HepG2 (cell line): ENCODE measurements at regions of chr11 and their contacts with region 1.

Region 1: DNA sequence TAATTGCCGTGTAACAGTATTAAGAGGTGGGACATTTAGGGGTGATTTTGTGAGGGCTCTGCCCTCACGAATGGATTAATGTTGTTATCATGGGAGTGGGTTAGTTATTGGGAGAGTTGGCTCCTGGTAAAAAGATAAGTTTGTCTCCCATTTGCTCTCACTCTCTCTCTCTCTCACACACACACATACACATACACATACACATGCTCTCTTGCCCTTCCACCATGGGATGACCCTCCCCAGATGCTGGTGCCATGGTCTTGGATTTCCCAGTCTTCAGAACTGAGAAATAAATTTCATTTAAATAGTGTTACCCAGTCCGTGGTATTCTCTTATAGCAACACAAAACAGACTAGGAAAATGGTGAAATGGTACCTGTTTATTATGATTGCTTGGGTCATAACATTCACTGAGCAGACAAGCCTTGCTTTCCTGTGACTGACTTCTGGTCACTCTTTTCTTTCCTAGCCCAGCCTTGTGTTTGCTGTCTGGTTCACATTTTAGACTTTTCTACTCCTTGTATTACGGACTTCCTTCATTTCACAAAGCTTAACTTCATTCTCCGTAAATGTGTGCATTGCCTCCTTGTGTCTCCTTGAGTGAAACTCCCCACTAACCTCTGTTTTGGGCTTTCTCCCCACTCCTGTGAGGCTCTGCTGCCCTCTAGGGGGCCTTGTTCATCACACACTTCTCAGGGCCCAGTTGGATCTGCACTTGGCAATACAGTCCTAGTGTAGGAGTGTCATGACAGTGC is 206.5 kb upstream of the CTSC start:
- DNase-seq: peak; percentile 55
- ATAC-seq: peak; percentile 100
- H3K4me3 ChIP-seq: no peak overlapping the region
- H3K27ac ChIP-seq: no peak overlapping the region
- H3K4me1 ChIP-seq: no peaks in the 10 kb centered on the region
- H3K27me3 ChIP-seq: no peaks in the 10 kb centered on the region
- CTCF ChIP-seq: peak; percentile 93
- EP300 ChIP-seq: no peak
- POLR2A ChIP-seq: no peak
- RAD21 ChIP-seq: peak; percentile 82

Region 2: GRCh38 chr11:87352759-87353707 is 1191.0 kb before region 1 on chr11:
- CTCF ChIA-PET with region 1: no interaction called
- POLR2A ChIA-PET with region 1: no interaction called
- in situ Hi-C with region 1: loop called (anchors 10 kb)
- intact Hi-C with region 1: no loop called
- DNase-seq: peak; percentile 51
- ATAC-seq: peak; percentile 98
- H3K4me3 ChIP-seq: no peak overlapping the region; a peak in 1 of 6 replicates
- H3K27ac ChIP-seq: no peak overlapping the region
- H3K4me1 ChIP-seq: no peaks in the 10 kb centered on the region
- H3K27me3 ChIP-seq: no peaks in the 10 kb centered on the region
- CTCF ChIP-seq: peak; percentile 98
- EP300 ChIP-seq: no peak
- POLR2A ChIP-seq: no peak
- RAD21 ChIP-seq: peak; percentile 93

Region 3: GRCh38 chr11:87722756-87723565 is 821.1 kb before region 1 on chr11:
- CTCF ChIA-PET with region 1: interaction called, 3 read pairs
- POLR2A ChIA-PET with region 1: no interaction called
- in situ Hi-C with region 1: no loop called
- intact Hi-C with region 1: loop called (anchors 5 kb)
- DNase-seq: peak; percentile 7
- ATAC-seq: peak; percentile 76
- H3K4me3 ChIP-seq: no peak overlapping the region
- H3K27ac ChIP-seq: no peak overlapping the region
- H3K4me1 ChIP-seq: no peaks in the 10 kb centered on the region
- H3K27me3 ChIP-seq: no peaks in the 10 kb centered on the region
- CTCF ChIP-seq: peak; percentile 61
- EP300 ChIP-seq: no peak
- POLR2A ChIP-seq: no peak
- RAD21 ChIP-seq: 0 out of 2 replicates have a peak, but pooled peaks have one; percentile 21

Region 4: DNA sequence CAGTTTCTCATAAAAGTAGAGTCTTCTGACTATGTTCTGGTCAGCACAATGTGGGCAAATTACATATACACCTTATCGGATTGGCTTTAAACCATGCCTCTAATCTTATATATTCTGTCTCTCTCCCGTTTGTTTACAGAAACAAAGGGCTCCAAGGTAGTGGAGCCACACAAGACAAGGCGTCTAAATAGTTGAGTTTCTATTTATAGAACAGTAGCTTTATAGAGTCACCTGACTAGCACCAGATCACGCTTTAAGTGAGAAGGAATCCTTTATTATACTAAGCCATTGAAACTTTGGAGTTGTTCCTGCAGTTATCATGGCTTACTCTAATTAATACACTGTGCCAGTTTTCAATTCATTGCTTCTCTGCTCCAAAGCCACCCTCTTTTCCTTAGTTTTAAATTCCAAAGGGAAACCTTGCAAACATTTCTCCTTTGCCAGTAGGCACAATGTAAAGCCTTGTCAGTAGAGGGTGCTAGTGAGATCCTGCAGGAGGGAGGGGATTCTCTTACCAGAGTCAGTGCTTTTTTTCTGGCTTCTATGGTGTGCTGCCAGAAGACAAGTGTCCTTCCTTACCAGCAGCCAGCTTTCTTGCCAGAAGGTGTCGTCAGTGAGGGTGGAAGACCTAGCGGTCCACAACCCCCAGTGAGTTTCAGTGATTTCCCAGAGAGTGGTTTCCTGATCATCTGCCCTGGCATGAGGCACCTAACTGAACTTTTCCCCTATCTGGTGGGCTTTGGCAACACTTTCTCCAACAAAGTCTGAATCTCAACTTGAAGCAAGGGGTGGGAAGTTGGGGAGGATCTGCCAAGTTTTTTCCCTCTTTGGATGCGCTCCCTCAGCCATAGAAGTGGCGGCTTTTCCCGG is 440.5 kb before region 1 on chr11:
- CTCF ChIA-PET with region 1: interaction called, 10 read pairs
- POLR2A ChIA-PET with region 1: no interaction called
- in situ Hi-C with region 1: loop called (anchors 5 kb)
- intact Hi-C with region 1: loop called (anchors 1 kb)
- DNase-seq: peak; percentile 52
- ATAC-seq: peak; percentile 90
- H3K4me3 ChIP-seq: no peak overlapping the region
- H3K27ac ChIP-seq: no peak overlapping the region
- H3K4me1 ChIP-seq: 0 out of 2 replicates have a peak, but pooled peaks cover 8% of the 10 kb centered on the region
- H3K27me3 ChIP-seq: no peaks in the 10 kb centered on the region
- CTCF ChIP-seq: peak; percentile 73
- EP300 ChIP-seq: no peak
- POLR2A ChIP-seq: no peak
- RAD21 ChIP-seq: no peak

Region 5: DNA sequence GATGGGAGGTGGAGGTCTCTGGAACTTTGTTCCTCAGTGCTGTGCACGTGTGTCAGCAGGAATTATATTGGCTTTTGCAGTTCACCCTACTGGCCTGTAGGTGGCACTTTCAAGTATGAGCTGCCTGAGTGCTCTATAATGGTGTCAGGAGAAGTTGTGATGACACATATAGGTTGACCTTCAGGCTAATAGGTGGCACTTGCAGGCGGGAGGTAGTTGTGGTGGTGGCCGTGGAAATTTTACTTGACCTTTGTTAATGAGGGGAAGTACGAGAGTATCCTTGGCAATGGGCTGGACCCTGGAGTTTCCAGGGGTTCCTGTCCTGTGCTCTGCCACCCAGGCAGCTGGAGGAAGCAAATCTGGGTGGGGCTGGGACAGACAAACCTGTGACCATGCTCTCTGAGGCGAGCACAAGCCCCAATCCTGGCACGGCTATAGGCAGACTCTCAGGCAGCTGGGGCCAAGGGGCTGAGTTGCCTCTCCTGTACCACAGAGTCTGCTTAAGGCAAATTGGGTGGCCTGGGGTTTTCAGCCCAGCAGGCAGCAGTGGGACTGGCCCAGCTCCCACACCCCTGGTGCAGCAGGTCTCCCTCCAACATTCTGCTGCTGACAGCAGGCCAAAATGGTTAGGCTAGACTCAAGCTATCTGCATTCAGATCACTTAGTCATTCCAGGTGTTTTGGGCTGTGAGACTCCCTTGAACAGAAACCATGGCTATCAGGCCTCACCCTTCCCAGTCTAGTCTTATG is 59.0 kb before region 1 on chr11:
- CTCF ChIA-PET with region 1: interaction called, 4 read pairs
- POLR2A ChIA-PET with region 1: no interaction called
- in situ Hi-C with region 1: no loop called
- intact Hi-C with region 1: loop called (anchors 1 kb)
- DNase-seq: peak; percentile 50
- ATAC-seq: peak; percentile 99
- H3K4me3 ChIP-seq: no peak overlapping the region
- H3K27ac ChIP-seq: no peak overlapping the region
- H3K4me1 ChIP-seq: no peaks in the 10 kb centered on the region
- H3K27me3 ChIP-seq: no peaks in the 10 kb centered on the region
- CTCF ChIP-seq: peak; percentile 69
- EP300 ChIP-seq: no peak
- POLR2A ChIP-seq: no peak
- RAD21 ChIP-seq: 0 out of 2 replicates have a peak, but pooled peaks have one; percentile 18

Region 6: DNA sequence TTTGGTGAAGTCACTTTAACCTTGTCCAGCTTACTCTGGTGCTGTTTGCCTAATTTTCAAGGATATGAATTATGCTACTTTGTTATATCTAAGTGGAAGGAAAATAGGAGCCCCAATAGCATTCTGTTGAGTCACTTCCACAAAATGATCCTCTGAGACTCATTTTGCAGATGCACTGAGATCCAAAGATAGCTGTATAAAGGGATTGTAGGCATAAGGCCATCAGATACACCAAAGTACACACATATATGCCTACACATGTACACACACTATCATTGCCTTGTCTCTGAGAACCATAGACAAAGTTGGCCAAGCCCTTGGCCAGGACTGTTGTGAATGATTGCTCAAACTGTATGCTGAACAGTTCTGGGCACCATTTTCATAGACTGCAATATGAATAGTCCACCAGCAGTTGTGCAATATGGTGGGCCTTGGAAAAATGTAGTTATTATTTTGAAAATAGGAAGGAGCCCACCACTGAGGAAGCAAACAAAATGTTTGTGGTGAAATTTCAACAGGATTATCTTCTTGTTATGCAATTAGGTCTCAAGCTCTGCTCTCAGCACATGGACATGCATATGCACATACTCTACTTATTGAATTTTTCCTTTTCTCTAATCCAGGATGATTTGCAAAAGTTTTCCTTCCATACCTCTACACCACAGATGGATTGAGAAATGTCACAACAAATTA is 20.6 kb before region 1 on chr11:
- CTCF ChIA-PET with region 1: no interaction called
- POLR2A ChIA-PET with region 1: no interaction called
- in situ Hi-C with region 1: no loop called
- intact Hi-C with region 1: no loop called
- DNase-seq: no peak
- ATAC-seq: no peak
- H3K4me3 ChIP-seq: no peak overlapping the region
- H3K27ac ChIP-seq: no peak overlapping the region
- H3K4me1 ChIP-seq: no peaks in the 10 kb centered on the region
- H3K27me3 ChIP-seq: no peaks in the 10 kb centered on the region
- CTCF ChIP-seq: no peak
- EP300 ChIP-seq: no peak
- POLR2A ChIP-seq: no peak
- RAD21 ChIP-seq: no peak

Region 7: GRCh38 chr11:88644724-88645123 is 100.6 kb after region 1 on chr11:
- CTCF ChIA-PET with region 1: no interaction called
- POLR2A ChIA-PET with region 1: no interaction called
- in situ Hi-C with region 1: no loop called
- intact Hi-C with region 1: no loop called
- DNase-seq: no peak
- ATAC-seq: no peak
- H3K4me3 ChIP-seq: no peak overlapping the region
- H3K27ac ChIP-seq: no peak overlapping the region
- H3K4me1 ChIP-seq: no peaks in the 10 kb centered on the region
- H3K27me3 ChIP-seq: no peaks in the 10 kb centered on the region
- CTCF ChIP-seq: no peak
- EP300 ChIP-seq: no peak
- POLR2A ChIP-seq: no peak
- RAD21 ChIP-seq: no peak

Region 8: DNA sequence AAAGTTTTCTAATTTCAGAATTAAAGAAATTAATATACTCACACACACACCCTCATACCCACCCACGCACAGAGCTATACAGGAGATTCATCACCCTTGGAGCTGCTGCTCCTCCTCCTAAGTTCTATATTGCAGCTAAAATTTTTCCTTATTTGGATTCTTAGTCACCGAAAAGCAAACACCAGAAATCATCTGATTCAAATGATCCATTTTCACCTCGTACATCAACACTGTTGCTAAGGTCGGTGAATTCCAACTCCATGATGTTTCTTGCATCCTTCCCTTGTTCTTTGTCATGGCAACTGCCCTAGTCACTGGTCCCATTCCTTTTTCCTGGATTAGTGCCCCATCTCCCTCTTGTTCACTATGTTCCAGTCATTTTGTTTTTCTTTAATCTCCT is 235.5 kb after region 1 on chr11:
- CTCF ChIA-PET with region 1: no interaction called
- POLR2A ChIA-PET with region 1: no interaction called
- in situ Hi-C with region 1: no loop called
- intact Hi-C with region 1: no loop called
- DNase-seq: peak; percentile 0
- ATAC-seq: no peak
- H3K4me3 ChIP-seq: no peak overlapping the region
- H3K27ac ChIP-seq: no peak overlapping the region
- H3K4me1 ChIP-seq: no peaks in the 10 kb centered on the region
- H3K27me3 ChIP-seq: no peaks in the 10 kb centered on the region
- CTCF ChIP-seq: no peak
- EP300 ChIP-seq: no peak
- POLR2A ChIP-seq: no peak
- RAD21 ChIP-seq: no peak